Activated CD8-positive, alpha-beta T cell treated with anti-CD3 and anti-CD28 coated beads for 36 hours (primary cell): ENCODE measurements at regions of chr14 and their contacts with region 1.

Region 1: GRCh38 chr14:76352639-76353281 is 23.2 kb upstream of the ESRRB start:
- DNase-seq: peak; percentile 72
- ATAC-seq: peak; percentile 86
- H3K4me3 Mint-ChIP-seq: no peak overlapping the region
- H3K27ac Mint-ChIP-seq: no peak overlapping the region
- H3K4me1 Mint-ChIP-seq: no peaks in the 10 kb centered on the region
- H3K27me3 Mint-ChIP-seq: peaks cover 17% of the 10 kb centered on the region
- CTCF ChIP-seq: peak; percentile 92

Region 2: GRCh38 chr14:76045773-76046172 is 307.0 kb before region 1 on chr14:
- CTCF ChIA-PET with region 1: interaction called, 108 read pairs
- POLR2A ChIA-PET with region 1: no interaction called
- intact Hi-C with region 1: loop called (anchors 2 kb)
- DNase-seq: no peak
- ATAC-seq: no peak
- H3K4me3 Mint-ChIP-seq: no peak overlapping the region
- H3K27ac Mint-ChIP-seq: no peak overlapping the region
- H3K4me1 Mint-ChIP-seq: no peaks in the 10 kb centered on the region
- H3K27me3 Mint-ChIP-seq: no peaks in the 10 kb centered on the region
- CTCF ChIP-seq: no peak

Region 3: DNA sequence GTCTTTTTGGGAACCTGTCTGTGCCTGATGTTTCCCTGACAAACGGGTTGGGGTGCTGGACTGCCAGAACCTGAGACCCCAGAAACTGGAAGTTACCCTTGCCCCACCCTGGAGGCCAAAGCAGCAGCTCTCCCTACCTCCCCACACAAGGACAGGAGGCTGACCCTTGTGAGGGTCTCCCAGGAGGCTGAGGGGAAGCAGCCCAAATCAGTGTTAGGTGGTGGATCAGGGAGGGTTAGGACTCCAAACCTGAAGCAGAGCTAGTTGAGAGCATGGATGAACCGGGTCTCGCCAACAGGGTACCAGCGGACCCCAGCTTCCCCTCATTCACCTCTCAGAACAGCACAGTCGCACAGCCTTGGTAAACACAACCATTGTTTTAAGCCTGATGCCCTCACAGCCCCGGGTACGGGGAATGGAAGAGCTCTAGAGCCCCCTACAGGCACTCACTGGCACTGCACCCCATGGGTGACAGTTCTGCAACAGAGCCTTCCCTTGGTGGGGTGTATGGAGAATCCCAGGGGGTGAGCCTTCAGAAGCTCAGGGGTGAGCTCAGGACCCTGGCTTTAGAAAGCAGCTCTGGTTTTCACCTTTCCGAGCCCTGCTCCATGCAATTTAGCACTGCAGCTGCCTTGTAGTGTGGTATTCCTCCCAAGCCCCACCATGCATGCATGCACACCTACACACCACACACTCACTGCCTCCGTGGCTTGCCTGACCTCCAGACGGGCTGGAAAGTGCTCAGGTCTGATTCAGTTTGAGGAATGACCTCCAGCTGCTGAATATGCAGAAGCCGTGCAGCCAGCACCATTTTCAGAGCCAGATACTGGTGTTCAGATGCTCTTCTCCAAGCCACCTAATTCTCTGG is 34.4 kb after region 1 on chr14:
- CTCF ChIA-PET with region 1: interaction called, 13 read pairs
- POLR2A ChIA-PET with region 1: interaction called, 3 read pairs
- intact Hi-C with region 1: no loop called
- DNase-seq: peak; percentile 77
- ATAC-seq: peak; percentile 99
- H3K4me3 Mint-ChIP-seq: no peak overlapping the region
- H3K27ac Mint-ChIP-seq: no peak overlapping the region
- H3K4me1 Mint-ChIP-seq: no peaks in the 10 kb centered on the region
- H3K27me3 Mint-ChIP-seq: peaks cover 33% of the 10 kb centered on the region
- CTCF ChIP-seq: peak; percentile 92